ENCODE measurements at regions of chr20 and their contacts with region 1.

Region 1: DNA sequence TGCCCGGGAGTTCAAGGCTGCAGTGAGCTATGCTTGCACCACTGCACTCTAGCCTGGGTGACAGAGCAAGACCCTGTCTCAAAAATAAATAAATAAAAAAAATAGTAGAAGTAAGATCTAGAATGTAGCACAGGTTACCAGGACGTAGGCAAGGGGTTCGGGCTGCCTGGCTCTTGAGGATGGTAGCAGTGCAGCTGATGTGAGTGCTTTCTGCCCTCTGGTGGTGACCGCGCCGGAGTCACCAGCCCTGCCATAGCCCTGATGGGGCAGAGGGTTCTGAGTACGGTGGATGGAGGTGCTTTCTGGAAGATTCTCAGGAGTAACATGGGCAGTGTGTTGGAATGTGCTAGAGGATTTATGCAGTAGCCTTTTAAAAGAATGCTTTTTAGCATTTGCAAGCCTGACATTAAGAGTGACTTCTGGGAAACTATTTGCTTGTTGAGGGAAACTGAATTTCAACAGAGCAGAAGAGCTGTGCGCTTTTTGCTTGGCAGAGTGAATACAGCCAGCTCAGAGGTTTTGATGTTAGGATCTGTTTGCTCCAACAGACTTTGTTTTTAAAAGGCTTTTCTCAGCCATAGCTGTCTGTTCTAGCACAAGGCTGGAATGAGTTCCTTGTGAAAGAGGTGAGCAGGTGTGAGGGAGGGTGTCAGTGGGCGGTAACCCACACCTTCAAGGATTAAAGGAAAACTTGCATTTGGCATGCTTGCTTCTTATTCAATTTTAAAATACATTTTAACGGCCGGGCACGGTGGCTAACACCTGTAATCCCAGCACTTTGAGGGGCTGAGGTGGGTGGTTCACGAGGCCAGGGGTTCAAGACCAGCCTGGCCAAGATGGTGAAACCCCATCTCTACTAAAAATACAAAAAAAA is 65.9 kb downstream of the PTPN1 start:
- DNase-seq: peak; percentile 83
- ATAC-seq: peak; percentile 89
- H3K4me3 Mint-ChIP-seq: no peak overlapping the region
- H3K27ac Mint-ChIP-seq: peak overlapping the region; percentile 16
- H3K4me1 Mint-ChIP-seq: peaks cover 44% of the 10 kb centered on the region
- H3K27me3 Mint-ChIP-seq: no peaks in the 10 kb centered on the region

Region 2: GRCh38 chr20:50484276-50484976 is 91.7 kb before region 1 on chr20:
- CTCF ChIA-PET with region 1: interaction called, 19 read pairs
- POLR2A ChIA-PET with region 1: no interaction called
- intact Hi-C with region 1: loop called in 1 of 2 experiments (anchors 2 kb)
- DNase-seq: peak; percentile 15
- ATAC-seq: no peak
- H3K4me3 Mint-ChIP-seq: peak overlapping the region; percentile 73
- H3K27ac Mint-ChIP-seq: peak overlapping the region; percentile 93
- H3K4me1 Mint-ChIP-seq: peaks cover 30% of the 10 kb centered on the region
- H3K27me3 Mint-ChIP-seq: no peaks in the 10 kb centered on the region